IMR-90 (cell line): ENCODE measurements at regions of chr1 and their contacts with region 1.

Region 1: GRCh38 chr1:89908672-89909436 is 86.1 kb upstream of the ZNF326 start:
- DNase-seq: peak; percentile 79
- ATAC-seq: 0 out of 2 replicates have a peak, but pooled peaks have one; percentile 1
- H3K4me3 ChIP-seq: no peak overlapping the region
- H3K27ac ChIP-seq: peak overlapping the region; percentile 63
- H3K4me1 ChIP-seq: peaks cover 43% of the 10 kb centered on the region
- H3K27me3 ChIP-seq: no peaks in the 10 kb centered on the region
- CTCF ChIP-seq: no peak
- POLR2A ChIP-seq: no peak
- RAD21 ChIP-seq: no peak

Region 2: DNA sequence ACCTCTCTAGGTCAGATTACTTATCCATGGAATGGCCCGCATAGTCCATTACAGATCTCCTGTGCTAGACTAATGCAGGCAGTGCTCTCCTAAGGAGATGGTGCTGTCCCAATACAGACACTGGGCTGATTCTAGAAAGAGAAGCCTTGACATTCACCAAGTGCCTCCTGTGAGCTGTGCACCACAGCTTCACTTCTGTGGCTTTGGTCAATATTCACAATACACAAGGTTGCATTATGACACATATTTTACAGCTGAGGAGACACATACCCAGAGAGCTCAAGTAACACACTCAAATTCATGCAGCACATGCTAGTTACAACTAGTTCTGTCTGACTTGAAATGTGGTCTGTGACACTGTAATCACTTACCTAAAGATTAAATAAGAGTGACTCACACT is 443.7 kb before region 1 on chr1:
- CTCF ChIA-PET with region 1: no interaction called
- POLR2A ChIA-PET with region 1: no interaction called
- dilution Hi-C with region 1: no loop called
- in situ Hi-C with region 1: no loop called
- intact Hi-C with region 1: no loop called
- DNase-seq: no peak
- ATAC-seq: no peak
- H3K4me3 ChIP-seq: no peak overlapping the region
- H3K27ac ChIP-seq: no peak overlapping the region
- H3K4me1 ChIP-seq: no peaks in the 10 kb centered on the region
- H3K27me3 ChIP-seq: no peaks in the 10 kb centered on the region; the same call in 1 of the 2 replicates
- CTCF ChIP-seq: no peak
- POLR2A ChIP-seq: no peak
- RAD21 ChIP-seq: no peak

Region 3: GRCh38 chr1:89706700-89707012 is 202.2 kb before region 1 on chr1:
- CTCF ChIA-PET with region 1: no interaction called
- POLR2A ChIA-PET with region 1: no interaction called
- dilution Hi-C with region 1: no loop called
- in situ Hi-C with region 1: no loop called
- intact Hi-C with region 1: no loop called
- DNase-seq: no peak
- ATAC-seq: no peak
- H3K4me3 ChIP-seq: no peak overlapping the region
- H3K27ac ChIP-seq: no peak overlapping the region
- H3K4me1 ChIP-seq: no peaks in the 10 kb centered on the region
- H3K27me3 ChIP-seq: no peaks in the 10 kb centered on the region
- CTCF ChIP-seq: no peak
- POLR2A ChIP-seq: no peak
- RAD21 ChIP-seq: no peak

Region 4: DNA sequence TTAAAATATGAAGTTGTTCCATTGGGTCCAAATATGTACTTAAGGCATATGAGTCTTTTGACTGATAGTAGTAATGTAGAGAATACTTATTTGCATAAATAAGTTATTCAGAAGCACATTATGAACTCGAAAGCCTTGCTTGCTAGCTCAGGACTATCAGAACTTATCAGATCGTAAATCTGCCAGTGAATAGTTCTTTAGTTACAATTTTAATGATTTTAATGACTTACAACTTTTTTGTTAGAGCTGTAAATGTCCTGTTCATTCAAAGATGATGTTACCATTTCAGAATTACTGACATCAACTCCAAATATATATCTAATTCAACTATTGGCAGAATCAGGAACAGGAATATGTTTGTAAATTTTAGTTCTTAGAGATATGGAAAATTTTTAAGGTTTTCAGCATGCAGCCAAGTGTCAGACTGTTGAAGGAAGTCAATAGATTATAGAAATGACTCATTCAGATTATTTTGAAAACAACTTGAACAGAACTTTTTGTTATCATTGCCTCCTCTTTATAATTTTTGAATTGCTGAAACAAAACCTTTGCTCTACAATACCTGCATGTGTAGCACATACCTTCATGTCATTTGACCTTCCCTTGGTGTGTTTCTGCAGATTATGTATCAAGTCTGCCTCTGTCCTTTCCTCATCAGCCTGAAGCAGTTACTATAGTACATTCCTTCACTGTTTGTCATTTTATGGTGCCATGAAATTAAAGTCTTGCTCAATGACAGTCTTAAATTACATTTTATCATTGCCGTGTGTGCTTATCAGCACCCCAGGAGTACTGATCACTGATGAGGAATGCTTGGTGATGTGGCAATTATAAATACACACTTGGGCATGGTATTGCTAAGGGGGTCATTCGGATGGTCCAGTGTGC is 43.1 kb before region 1 on chr1:
- CTCF ChIA-PET with region 1: interaction called, 3 read pairs
- POLR2A ChIA-PET with region 1: no interaction called
- dilution Hi-C with region 1: no loop called
- in situ Hi-C with region 1: no loop called
- intact Hi-C with region 1: loop called (anchors 5 kb)
- DNase-seq: peak; percentile 79
- ATAC-seq: peak; percentile 82
- H3K4me3 ChIP-seq: no peak overlapping the region
- H3K27ac ChIP-seq: no peak overlapping the region
- H3K4me1 ChIP-seq: peaks cover 5% of the 10 kb centered on the region
- H3K27me3 ChIP-seq: no peaks in the 10 kb centered on the region
- CTCF ChIP-seq: no peak
- POLR2A ChIP-seq: no peak
- RAD21 ChIP-seq: no peak

Region 5: GRCh38 chr1:89953072-89953626 is 44.3 kb after region 1 on chr1:
- CTCF ChIA-PET with region 1: no interaction called
- POLR2A ChIA-PET with region 1: no interaction called
- dilution Hi-C with region 1: no loop called
- in situ Hi-C with region 1: no loop called
- intact Hi-C with region 1: loop called (anchors 5 kb)
- DNase-seq: peak; percentile 92
- ATAC-seq: peak; percentile 81
- H3K4me3 ChIP-seq: no peak overlapping the region
- H3K27ac ChIP-seq: peak overlapping the region; percentile 85
- H3K4me1 ChIP-seq: peaks cover 14% of the 10 kb centered on the region
- H3K27me3 ChIP-seq: no peaks in the 10 kb centered on the region
- CTCF ChIP-seq: peak; percentile 28; the same call in 1 of the 2 replicates
- POLR2A ChIP-seq: no peak; the same call in 1 of the 2 replicates
- RAD21 ChIP-seq: peak; percentile 35; the same call in 1 of the 2 replicates